G401 (cell line): ENCODE measurements at regions of chr1 and their contacts with region 1.

Region 1: DNA sequence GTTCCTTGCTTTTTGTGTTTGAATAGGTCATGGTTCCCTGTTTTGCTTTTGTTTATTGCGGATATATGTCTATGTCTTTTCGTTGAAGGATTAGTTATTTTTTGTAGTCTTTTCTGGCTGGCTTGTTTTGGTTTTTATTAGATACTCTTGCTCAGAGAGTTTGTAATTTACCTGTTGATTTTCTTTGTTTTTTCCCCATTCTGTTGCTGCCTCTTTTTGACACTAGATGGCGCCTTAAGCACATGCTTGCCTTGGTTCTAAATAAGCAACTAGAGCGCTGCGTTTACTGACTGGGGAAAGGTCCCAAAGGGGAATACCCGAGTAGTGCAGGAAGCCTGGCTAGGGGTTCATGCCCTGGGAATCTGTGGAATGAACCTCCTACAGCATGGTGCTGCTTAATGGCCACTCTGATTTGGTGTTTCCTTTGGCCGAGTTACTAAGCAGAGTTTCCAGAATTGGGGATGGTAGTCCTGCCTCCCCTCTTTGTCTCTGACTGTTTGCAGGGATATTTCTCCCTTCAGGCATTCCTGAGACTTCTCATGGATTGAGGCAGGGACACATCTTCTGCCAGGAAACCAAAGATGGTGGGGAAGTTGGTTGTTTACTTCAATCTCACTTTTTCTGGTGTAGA is 143.2 kb downstream of the PTPRU start:
- DNase-seq: no peak

Region 2: GRCh38 chr1:29230553-29231378 is 148.8 kb before region 1 on chr1 and contains the start of gene MECR:
- in situ Hi-C with region 1: loop called (anchors 25 kb)
- DNase-seq: peak; percentile 87
- total RNA-seq, gene MECR: 34.2 and 41.0 TPM in 2 replicates

Region 3: GRCh38 chr1:29579821-29580425 is 200.4 kb after region 1 on chr1:
- in situ Hi-C with region 1: no loop called
- DNase-seq: no peak